CD4-positive, alpha-beta T cell (primary cell): ENCODE measurements at regions of chr22 and their contacts with region 1.

Region 1: GRCh38 chr22:17785185-17786184 is 11.2 kb upstream of the BID start:
- DNase-seq: peak; percentile 61 to 85 (median 68)
- ATAC-seq: peak; percentile 69
- H3K4me3 ChIP-seq: no peak overlapping the region
- H3K4me3 Mint-ChIP-seq: no peak overlapping the region
- H3K27ac ChIP-seq: no peak overlapping the region
- H3K27ac Mint-ChIP-seq: no peak overlapping the region
- H3K4me1 ChIP-seq: peaks cover 40% of the 10 kb centered on the region
- H3K4me1 Mint-ChIP-seq: peaks cover 13% of the 10 kb centered on the region
- H3K27me3 ChIP-seq: no peaks in the 10 kb centered on the region
- H3K27me3 Mint-ChIP-seq: no peaks in the 10 kb centered on the region
- CTCF ChIP-seq: peak; percentile 76

Region 2: GRCh38 chr22:17638432-17639246 is 146.8 kb before region 1 on chr22 and contains the start of gene BCL2L13:
- CTCF ChIA-PET with region 1: no interaction called
- POLR2A ChIA-PET with region 1: interaction called, 4 read pairs
- intact Hi-C with region 1: loop called in 1 of 2 experiments (anchors 10 kb)
- DNase-seq: peak; percentile 77 to 94 (median 84)
- ATAC-seq: peak; percentile 90
- H3K4me3 ChIP-seq: peak within 1 kb of the TSS; percentile 85
- H3K4me3 Mint-ChIP-seq: peak within 1 kb of the TSS; percentile 92
- H3K27ac ChIP-seq: peak within 1 kb of the TSS; percentile 98 to 99
- H3K27ac Mint-ChIP-seq: peak within 1 kb of the TSS; percentile 96
- H3K4me1 ChIP-seq: peaks cover 24% of the 10 kb centered on the region
- H3K4me1 Mint-ChIP-seq: peaks cover 31% of the 10 kb centered on the region
- H3K27me3 ChIP-seq: no peaks in the 10 kb centered on the region
- H3K27me3 Mint-ChIP-seq: no peaks in the 10 kb centered on the region
- CTCF ChIP-seq: no peak
- total RNA-seq, gene BCL2L13: 8.1 to 10.0 TPM

Region 3: DNA sequence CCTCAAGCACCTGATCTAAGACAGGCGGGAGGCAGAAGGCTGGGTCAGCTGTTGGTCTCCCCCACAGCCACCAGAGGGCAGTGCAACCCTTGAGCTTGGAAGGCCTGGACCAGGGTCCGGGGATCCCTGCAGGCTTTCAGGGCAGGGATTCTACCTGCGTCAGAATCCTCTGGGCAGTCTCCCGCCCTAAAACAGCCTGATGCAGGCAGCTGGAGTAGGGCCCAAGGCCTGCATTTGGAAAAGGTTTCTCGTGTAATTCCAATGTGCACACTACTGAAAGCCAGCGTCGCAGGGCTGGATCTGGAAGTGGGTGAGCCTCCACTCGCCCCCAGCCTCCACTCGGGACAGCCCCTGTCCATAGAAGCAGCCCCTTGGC is 43.0 kb before region 1 on chr22:
- CTCF ChIA-PET with region 1: interaction called, 45 read pairs
- POLR2A ChIA-PET with region 1: interaction called, 9 read pairs
- intact Hi-C with region 1: loop called (anchors 1 kb)
- DNase-seq: peak; percentile 47 to 85 (median 59)
- ATAC-seq: peak; percentile 87
- H3K4me3 ChIP-seq: no peak overlapping the region
- H3K4me3 Mint-ChIP-seq: no peak overlapping the region
- H3K27ac ChIP-seq: no peak overlapping the region
- H3K27ac Mint-ChIP-seq: no peak overlapping the region
- H3K4me1 ChIP-seq: peaks cover 8% of the 10 kb centered on the region
- H3K4me1 Mint-ChIP-seq: peaks cover 7% of the 10 kb centered on the region
- H3K27me3 ChIP-seq: no peaks in the 10 kb centered on the region
- H3K27me3 Mint-ChIP-seq: no peaks in the 10 kb centered on the region
- CTCF ChIP-seq: peak; percentile 82

Region 4: DNA sequence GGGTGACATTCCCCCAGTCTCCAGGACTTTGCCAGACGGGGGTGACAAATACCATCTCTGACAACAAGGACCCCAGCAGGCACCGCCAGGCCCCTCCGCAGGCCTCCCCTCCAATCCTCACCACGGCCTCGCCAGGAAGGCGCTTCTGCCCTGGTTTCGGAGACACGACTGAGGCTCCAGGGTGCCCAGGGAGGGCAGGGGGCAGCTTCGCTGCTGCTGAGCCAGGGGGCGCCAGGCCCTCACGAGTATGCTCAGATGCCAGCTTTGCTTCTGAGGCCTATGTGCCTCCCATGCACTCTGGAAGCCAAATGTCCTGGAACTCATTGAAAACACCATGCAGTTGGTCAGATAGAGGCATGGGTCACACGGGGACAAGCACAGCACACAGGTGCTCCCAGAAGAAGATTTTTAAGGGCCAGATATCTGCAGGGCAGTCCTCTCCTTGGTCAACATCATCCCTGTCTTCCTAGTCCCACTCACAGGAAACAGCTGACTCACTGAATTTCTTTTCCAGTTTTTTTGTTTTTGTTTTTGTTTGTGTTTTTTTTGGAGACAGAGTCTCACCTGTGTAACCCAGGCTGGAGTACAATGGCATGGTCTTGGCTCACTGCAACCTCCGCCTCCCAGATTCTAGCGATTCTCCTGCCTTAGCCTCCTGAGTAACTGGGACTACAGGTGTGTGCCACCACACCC is 31.1 kb before region 1 on chr22:
- CTCF ChIA-PET with region 1: interaction called, 18 read pairs
- POLR2A ChIA-PET with region 1: no interaction called
- intact Hi-C with region 1: no loop called
- DNase-seq: peak in 7 of 14 experiments; percentile 27 to 67 (median 35)
- ATAC-seq: peak; percentile 54
- H3K4me3 ChIP-seq: no peak overlapping the region
- H3K4me3 Mint-ChIP-seq: no peak overlapping the region
- H3K27ac ChIP-seq: no peak overlapping the region
- H3K27ac Mint-ChIP-seq: peak overlapping the region; percentile 24
- H3K4me1 ChIP-seq: no peaks in the 10 kb centered on the region
- H3K4me1 Mint-ChIP-seq: peaks cover 10% of the 10 kb centered on the region
- H3K27me3 ChIP-seq: no peaks in the 10 kb centered on the region
- H3K27me3 Mint-ChIP-seq: no peaks in the 10 kb centered on the region
- CTCF ChIP-seq: peak; percentile 34

Region 5: GRCh38 chr22:17767233-17768065 is 18.0 kb before region 1 on chr22:
- CTCF ChIA-PET with region 1: interaction called, 20 read pairs
- POLR2A ChIA-PET with region 1: interaction called, 5 read pairs
- intact Hi-C with region 1: loop called in 1 of 2 experiments (anchors 2 kb)
- DNase-seq: peak in 7 of 14 experiments; percentile 24 to 77 (median 46)
- ATAC-seq: peak; percentile 69
- H3K4me3 ChIP-seq: peak overlapping the region; percentile 28
- H3K4me3 Mint-ChIP-seq: peak overlapping the region; percentile 78
- H3K27ac ChIP-seq: peak overlapping the region in 1 of 2 donors; percentile 57
- H3K27ac Mint-ChIP-seq: peak overlapping the region; percentile 86
- H3K4me1 ChIP-seq: peaks cover 59% of the 10 kb centered on the region
- H3K4me1 Mint-ChIP-seq: peaks cover 59% of the 10 kb centered on the region
- H3K27me3 ChIP-seq: no peaks in the 10 kb centered on the region
- H3K27me3 Mint-ChIP-seq: no peaks in the 10 kb centered on the region
- CTCF ChIP-seq: no peak

Region 6: DNA sequence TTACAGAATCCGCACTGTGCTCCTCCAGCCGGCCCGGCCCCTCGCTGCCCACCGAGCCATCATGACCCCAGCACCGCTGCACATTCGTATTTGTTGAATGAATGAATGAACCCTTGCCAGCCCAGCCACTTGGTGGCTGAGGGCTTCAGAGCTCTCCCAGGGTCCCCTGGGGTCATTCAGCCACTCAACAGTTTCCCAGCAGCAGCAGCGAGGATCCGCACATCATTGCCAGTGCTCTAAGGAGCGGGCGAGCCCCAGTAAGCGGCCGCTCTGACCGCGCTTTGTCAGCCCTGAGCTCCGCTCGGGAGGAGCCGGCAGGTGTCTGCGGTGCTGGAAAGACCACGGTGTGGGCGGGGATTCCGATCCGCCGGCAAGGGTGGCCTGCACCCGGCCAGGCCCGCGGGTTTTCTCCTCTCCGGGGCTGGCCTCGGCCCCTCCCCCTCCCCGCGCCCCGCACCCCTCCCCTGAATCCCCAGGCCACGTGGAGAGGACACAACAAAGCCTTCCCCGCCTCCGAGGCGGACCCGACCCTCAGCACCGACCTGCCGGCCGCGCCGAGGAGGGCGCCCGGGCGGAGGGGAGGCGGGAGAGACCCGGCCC is 11.8 kb before region 1 on chr22:
- CTCF ChIA-PET with region 1: interaction called, 20 read pairs
- POLR2A ChIA-PET with region 1: interaction called, 7 read pairs
- intact Hi-C with region 1: loop called in 1 of 2 experiments (anchors 2 kb)
- DNase-seq: peak; percentile 34 to 85 (median 46)
- ATAC-seq: peak; percentile 47
- H3K4me3 ChIP-seq: peak overlapping the region; percentile 76
- H3K4me3 Mint-ChIP-seq: peak overlapping the region; percentile 90
- H3K27ac ChIP-seq: no peak overlapping the region
- H3K27ac Mint-ChIP-seq: peak overlapping the region; percentile 90
- H3K4me1 ChIP-seq: peaks cover 85% of the 10 kb centered on the region
- H3K4me1 Mint-ChIP-seq: peaks cover 74% of the 10 kb centered on the region
- H3K27me3 ChIP-seq: no peaks in the 10 kb centered on the region
- H3K27me3 Mint-ChIP-seq: no peaks in the 10 kb centered on the region
- CTCF ChIP-seq: no peak